ENCODE measurements at regions of chr19 and their contacts with region 1.

Region 1: GRCh38 chr19:42325273-42325895 is at the start of gene MEGF8:
- DNase-seq: peak; percentile 96 to 99 (median 98)
- ATAC-seq: peak; percentile 93
- H3K4me3 ChIP-seq: peak within 1 kb of the TSS; percentile 85 to 98
- H3K4me3 Mint-ChIP-seq: peak within 1 kb of the TSS; percentile 97
- H3K27ac ChIP-seq: peak within 1 kb of the TSS; percentile 36 to 56
- H3K27ac Mint-ChIP-seq: peak within 1 kb of the TSS; percentile 88
- H3K4me1 ChIP-seq: peaks cover 12% of the 10 kb centered on the region
- H3K4me1 Mint-ChIP-seq: peaks cover 24% of the 10 kb centered on the region
- H3K27me3 ChIP-seq: peaks cover 4 to 7% of the 10 kb centered on the region in 2 experiments
- H3K27me3 Mint-ChIP-seq: peaks cover 12% of the 10 kb centered on the region
- CTCF ChIP-seq: peak; percentile 66
- total RNA-seq, gene MEGF8: 5.2 to 5.9 TPM

Region 2: DNA sequence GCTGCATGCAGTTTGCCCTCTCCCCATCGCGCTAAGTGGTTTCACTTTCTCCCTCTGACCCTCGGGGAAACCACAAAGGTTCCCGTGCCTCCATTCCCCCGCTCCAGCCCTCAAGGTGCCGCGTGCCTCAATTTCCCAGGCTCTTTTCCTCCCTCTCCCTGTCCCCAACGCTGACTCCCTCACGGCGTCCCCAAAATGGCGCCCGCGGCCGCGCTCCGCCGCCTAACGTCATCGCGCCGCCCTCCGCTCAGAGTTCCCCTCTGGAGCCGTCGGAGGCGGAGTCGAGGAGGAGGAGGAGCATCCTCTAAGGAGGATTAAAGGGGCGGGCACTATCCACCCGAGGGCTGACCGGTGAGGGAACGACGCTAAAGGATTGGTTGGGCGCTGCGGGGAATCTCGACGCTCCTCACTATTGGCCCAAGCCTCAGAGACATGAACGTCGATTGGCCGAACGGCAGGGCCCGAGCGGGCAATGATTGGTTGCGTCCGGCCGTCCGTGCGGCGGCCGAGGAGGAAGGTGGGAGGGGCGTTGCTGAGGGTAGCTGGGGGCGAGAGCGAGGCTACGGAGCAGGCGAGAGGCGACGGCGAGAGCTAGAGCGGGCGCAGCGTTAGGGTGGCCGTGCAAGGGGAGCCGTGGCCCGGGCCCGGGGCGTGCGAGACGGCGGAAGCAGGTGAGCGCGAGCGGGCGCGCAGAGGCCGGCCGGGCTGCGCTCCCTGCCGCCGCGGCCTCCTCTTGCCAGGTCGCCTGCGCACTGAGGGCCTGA is 249.6 kb before region 1 on chr19 and contains the start of gene ZNF574:
- CTCF ChIA-PET with region 1: no interaction called
- POLR2A ChIA-PET with region 1: no interaction called
- intact Hi-C with region 1: loop called (anchors 1 kb)
- DNase-seq: peak; percentile 97 to 100 (median 98)
- ATAC-seq: peak; percentile 95
- H3K4me3 ChIP-seq: peak within 1 kb of the TSS; percentile 72 to 76
- H3K4me3 Mint-ChIP-seq: peak within 1 kb of the TSS; percentile 97
- H3K27ac ChIP-seq: peak within 1 kb of the TSS; percentile 94 to 100
- H3K27ac Mint-ChIP-seq: peak within 1 kb of the TSS; percentile 99
- H3K4me1 ChIP-seq: peaks cover 21% of the 10 kb centered on the region
- H3K4me1 Mint-ChIP-seq: peaks cover 37% of the 10 kb centered on the region
- H3K27me3 ChIP-seq: no peaks in the 10 kb centered on the region
- H3K27me3 Mint-ChIP-seq: no peaks in the 10 kb centered on the region
- CTCF ChIP-seq: no peak
- total RNA-seq, gene ZNF574: 25.0 to 26.2 TPM

Region 3: GRCh38 chr19:42268704-42269477 is 56.5 kb before region 1 on chr19 and contains the start of gene CIC:
- CTCF ChIA-PET with region 1: no interaction called
- POLR2A ChIA-PET with region 1: no interaction called
- intact Hi-C with region 1: loop called (anchors 1 to 2 kb)
- DNase-seq: peak; percentile 97 to 100 (median 99)
- ATAC-seq: peak; percentile 70
- H3K4me3 ChIP-seq: peak within 1 kb of the TSS; percentile 70 to 83
- H3K4me3 Mint-ChIP-seq: peak within 1 kb of the TSS; percentile 86
- H3K27ac ChIP-seq: peak within 1 kb of the TSS; percentile 93 to 99
- H3K27ac Mint-ChIP-seq: peak within 1 kb of the TSS; percentile 97
- H3K4me1 ChIP-seq: peaks cover 29% of the 10 kb centered on the region
- H3K4me1 Mint-ChIP-seq: peaks cover 34% of the 10 kb centered on the region
- H3K27me3 ChIP-seq: no peaks in the 10 kb centered on the region
- H3K27me3 Mint-ChIP-seq: no peaks in the 10 kb centered on the region
- CTCF ChIP-seq: no peak
- total RNA-seq, gene CIC: 111 to 112 TPM

Region 4: GRCh38 chr19:42301656-42302203 is 23.7 kb before region 1 on chr19 and contains the start of gene PRR19:
- CTCF ChIA-PET with region 1: interaction called, 5 read pairs
- POLR2A ChIA-PET with region 1: no interaction called
- intact Hi-C with region 1: loop called (anchors 1 kb)
- DNase-seq: peak in 1 of 9 experiments; percentile 46
- ATAC-seq: peak; percentile 5
- H3K4me3 ChIP-seq: peak within 1 kb of the TSS; percentile 88 to 89
- H3K4me3 Mint-ChIP-seq: peak within 1 kb of the TSS; percentile 87
- H3K27ac ChIP-seq: peak within 1 kb of the TSS; percentile 37 to 56
- H3K27ac Mint-ChIP-seq: peak within 1 kb of the TSS; percentile 49
- H3K4me1 ChIP-seq: peaks cover 19% of the 10 kb centered on the region
- H3K4me1 Mint-ChIP-seq: peaks cover 28% of the 10 kb centered on the region
- H3K27me3 ChIP-seq: no peaks in the 10 kb centered on the region
- H3K27me3 Mint-ChIP-seq: no peaks in the 10 kb centered on the region
- CTCF ChIP-seq: no peak
- total RNA-seq, gene PRR19: 0.19 TPM in 1 of 2 experiments, not detected in the other

Region 5: GRCh38 chr19:42396381-42397262 is 71.2 kb after region 1 on chr19:
- CTCF ChIA-PET with region 1: no interaction called
- POLR2A ChIA-PET with region 1: interaction called, 3 read pairs
- intact Hi-C with region 1: loop called (anchors 2 to 5 kb)
- DNase-seq: peak; percentile 83 to 95 (median 90)
- ATAC-seq: peak; percentile 86
- H3K4me3 ChIP-seq: peak overlapping the region; percentile 55 to 75
- H3K4me3 Mint-ChIP-seq: peak overlapping the region; percentile 82
- H3K27ac ChIP-seq: peak overlapping the region; percentile 46 to 83
- H3K27ac Mint-ChIP-seq: peak overlapping the region; percentile 50
- H3K4me1 ChIP-seq: peaks cover 21% of the 10 kb centered on the region
- H3K4me1 Mint-ChIP-seq: peaks cover 40% of the 10 kb centered on the region
- H3K27me3 ChIP-seq: no peaks in the 10 kb centered on the region
- H3K27me3 Mint-ChIP-seq: no peaks in the 10 kb centered on the region
- CTCF ChIP-seq: no peak

Measured in CD8-positive, alpha-beta T cell (primary cell).